Common myeloid progenitor, CD34-positive (primary cell): ENCODE measurements at regions of chr7 and their contacts with region 1.

Region 1: GRCh38 chr7:107150375-107151073 is 18.3 kb upstream of the HBP1 start:
- DNase-seq: peak; percentile 87 to 95 (median 90)
- H3K4me3 ChIP-seq: no peak overlapping the region
- H3K27ac ChIP-seq: no peak overlapping the region
- H3K4me1 ChIP-seq: no peaks in the 10 kb centered on the region
- H3K27me3 ChIP-seq: no peaks in the 10 kb centered on the region

Region 2: GRCh38 chr7:106793015-106793975 is 357.2 kb before region 1 on chr7:
- CTCF ChIA-PET with region 1: interaction called, 10 read pairs
- POLR2A ChIA-PET with region 1: no interaction called
- DNase-seq: peak; percentile 49 to 69 (median 50)
- H3K4me3 ChIP-seq: no peak overlapping the region
- H3K27ac ChIP-seq: no peak overlapping the region
- H3K4me1 ChIP-seq: peaks cover 0 to 10% (median 0%) of the 10 kb centered on the region in 4 experiments
- H3K27me3 ChIP-seq: no peaks in the 10 kb centered on the region

Region 3: GRCh38 chr7:106938803-106939202 is 211.7 kb before region 1 on chr7:
- CTCF ChIA-PET with region 1: interaction called, 205 read pairs
- POLR2A ChIA-PET with region 1: no interaction called
- DNase-seq: no peak
- H3K4me3 ChIP-seq: no peak overlapping the region
- H3K27ac ChIP-seq: no peak overlapping the region
- H3K4me1 ChIP-seq: no peaks in the 10 kb centered on the region
- H3K27me3 ChIP-seq: no peaks in the 10 kb centered on the region

Region 4: GRCh38 chr7:106947244-106947728 is 203.2 kb before region 1 on chr7:
- CTCF ChIA-PET with region 1: interaction called, 205 read pairs
- POLR2A ChIA-PET with region 1: no interaction called
- DNase-seq: peak; percentile 81 to 90 (median 84)
- H3K4me3 ChIP-seq: no peak overlapping the region
- H3K27ac ChIP-seq: no peak overlapping the region
- H3K4me1 ChIP-seq: no peaks in the 10 kb centered on the region
- H3K27me3 ChIP-seq: no peaks in the 10 kb centered on the region

Region 5: GRCh38 chr7:107130487-107131225 is 19.9 kb before region 1 on chr7:
- CTCF ChIA-PET with region 1: interaction called, 26 read pairs
- POLR2A ChIA-PET with region 1: no interaction called
- DNase-seq: peak in 1 of 3 donors; percentile 11
- H3K4me3 ChIP-seq: no peak overlapping the region
- H3K27ac ChIP-seq: no peak overlapping the region
- H3K4me1 ChIP-seq: peaks cover 0 to 9% (median 5%) of the 10 kb centered on the region in 4 experiments
- H3K27me3 ChIP-seq: no peaks in the 10 kb centered on the region

Region 6: DNA sequence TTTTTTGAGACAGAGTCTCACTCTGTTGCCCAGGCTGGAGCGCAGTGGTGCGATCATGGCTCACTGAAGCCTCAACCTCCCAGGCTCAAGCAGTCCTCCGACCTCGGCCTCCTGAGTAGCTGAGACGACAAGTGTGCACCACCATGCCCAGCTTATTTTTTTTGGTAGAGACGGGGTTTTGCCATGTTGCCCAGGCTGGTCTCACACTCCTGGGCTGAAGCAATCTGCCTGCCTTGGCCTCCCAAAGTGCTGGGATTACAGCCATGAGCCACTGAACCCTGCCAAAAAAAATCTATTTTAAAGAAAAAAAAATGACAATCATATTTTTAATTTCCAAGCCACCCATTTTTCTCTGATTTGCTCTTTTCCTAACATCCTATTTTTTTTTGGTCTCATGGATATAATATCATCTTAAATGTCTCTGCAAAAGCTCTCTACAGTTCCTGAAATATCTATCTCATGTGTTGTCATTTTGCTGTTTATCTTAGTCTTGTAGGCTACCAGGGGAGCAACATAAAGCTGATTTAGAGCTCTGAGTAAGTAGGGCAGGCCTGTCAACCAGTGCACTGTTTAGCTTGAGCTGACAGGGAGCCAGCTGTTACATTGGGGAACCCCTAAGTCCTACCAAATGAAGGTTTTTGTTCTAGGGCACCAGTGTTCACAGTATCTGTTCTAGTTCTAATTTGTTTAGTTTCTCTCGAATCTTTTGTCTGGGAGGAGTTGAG is 11.7 kb before region 1 on chr7:
- CTCF ChIA-PET with region 1: interaction called, 15 read pairs
- POLR2A ChIA-PET with region 1: no interaction called
- DNase-seq: no peak
- H3K4me3 ChIP-seq: no peak overlapping the region
- H3K27ac ChIP-seq: no peak overlapping the region
- H3K4me1 ChIP-seq: no peaks in the 10 kb centered on the region
- H3K27me3 ChIP-seq: no peaks in the 10 kb centered on the region

Region 7: GRCh38 chr7:107168233-107169119 is 18.0 kb after region 1 on chr7 and contains the start of gene HBP1:
- CTCF ChIA-PET with region 1: interaction called, 16 read pairs
- POLR2A ChIA-PET with region 1: interaction called, 4 read pairs
- DNase-seq: peak; percentile 100
- H3K4me3 ChIP-seq: peak within 1 kb of the TSS; percentile 74 to 98 (median 90)
- H3K27ac ChIP-seq: peak within 1 kb of the TSS; percentile 97 to 99
- H3K4me1 ChIP-seq: peaks cover 14 to 27% (median 16%) of the 10 kb centered on the region in 4 experiments
- H3K27me3 ChIP-seq: no peaks in the 10 kb centered on the region